Endothelial cell of umbilical vein (primary cell): ENCODE measurements at regions of chrX and their contacts with region 1.

Region 1: DNA sequence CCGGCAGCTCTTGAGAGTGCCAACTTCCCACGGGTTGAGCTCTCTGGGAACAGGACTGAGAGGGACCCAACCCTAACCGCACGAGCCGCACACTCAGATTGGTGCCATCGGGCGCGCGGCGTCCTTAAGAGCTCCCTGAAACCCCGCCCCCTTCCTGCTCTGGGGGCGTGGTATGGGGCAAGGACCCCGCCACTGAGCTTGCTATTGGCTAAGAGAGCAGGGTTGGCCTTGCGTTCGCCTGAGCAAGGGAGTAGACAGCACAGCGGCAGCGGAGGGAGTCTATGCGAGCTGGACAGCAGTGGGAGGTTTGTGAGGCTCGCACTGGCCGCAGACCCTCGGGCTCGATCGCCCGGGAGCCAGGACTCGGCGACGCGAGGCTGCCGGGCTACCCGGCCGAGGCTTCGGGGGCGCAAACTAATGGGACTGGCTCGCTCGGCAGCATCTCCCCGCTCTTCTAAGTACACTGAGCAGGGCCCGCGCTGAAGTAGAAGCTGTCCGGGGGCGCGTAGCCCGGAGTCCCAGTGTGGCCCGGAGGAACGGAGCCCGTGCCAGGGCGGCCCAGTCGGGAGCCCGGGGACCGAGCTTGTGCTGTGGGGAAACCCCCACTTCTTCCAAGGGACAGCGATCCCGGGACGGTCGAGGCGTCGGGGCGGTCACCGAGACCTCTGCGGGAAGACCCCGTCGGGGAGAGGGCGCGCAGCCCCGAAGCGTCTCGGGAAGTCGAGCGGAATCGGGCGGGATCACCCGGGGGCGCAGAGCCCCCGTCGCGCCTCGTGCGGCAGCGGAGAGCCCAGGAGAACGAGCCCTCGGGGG is at the start of gene EFNB1:
- DNase-seq: peak; percentile 95
- H3K4me3 ChIP-seq: peak within 1 kb of the TSS; percentile 49 to 59 (median 50)
- H3K27ac ChIP-seq: no peak within 1 kb of the TSS
- H3K4me1 ChIP-seq: peaks cover 10% of the 10 kb centered on the region
- H3K27me3 ChIP-seq: peaks cover 0 to 2% of the 10 kb centered on the region in 2 experiments
- CTCF ChIP-seq: no peak
- POLR2A ChIP-seq: peak; percentile 88
- total RNA-seq, gene EFNB1: 8.8 and 13.3 TPM in 2 replicates

Region 2: DNA sequence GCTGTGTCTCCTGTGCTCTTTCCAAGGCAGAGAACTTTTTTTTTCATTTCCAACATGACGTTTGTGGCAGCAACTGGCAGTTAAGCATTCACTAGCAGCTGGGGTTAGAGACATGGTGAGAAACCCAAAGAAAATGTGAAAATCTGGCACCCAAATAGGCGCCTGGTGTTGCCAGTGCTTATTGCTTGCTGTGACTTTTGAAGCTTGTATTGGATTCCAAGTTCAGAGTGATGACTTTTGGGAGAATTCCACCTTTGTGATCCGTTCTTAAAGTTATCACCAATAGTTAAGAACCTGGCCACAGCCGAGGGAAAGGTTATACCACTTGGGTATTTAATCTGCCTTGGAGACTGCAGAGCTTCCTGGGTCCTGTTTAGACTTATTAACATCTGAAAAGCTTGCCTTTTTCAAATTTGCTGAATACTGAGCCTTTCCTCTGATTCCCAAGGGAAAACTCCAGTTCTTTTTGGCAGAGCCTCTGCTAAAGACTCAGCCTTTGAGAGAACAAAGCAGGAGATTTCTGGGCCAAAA is 496.7 kb before region 1 on chrX:
- CTCF ChIA-PET with region 1: no interaction called
- POLR2A ChIA-PET with region 1: no interaction called
- dilution Hi-C with region 1: no loop called
- intact Hi-C with region 1: no loop called
- DNase-seq: no peak
- H3K4me3 ChIP-seq: no peak overlapping the region
- H3K27ac ChIP-seq: no peak overlapping the region
- H3K4me1 ChIP-seq: no peaks in the 10 kb centered on the region
- H3K27me3 ChIP-seq: no peaks in the 10 kb centered on the region
- CTCF ChIP-seq: no peak
- POLR2A ChIP-seq: no peak

Region 3: DNA sequence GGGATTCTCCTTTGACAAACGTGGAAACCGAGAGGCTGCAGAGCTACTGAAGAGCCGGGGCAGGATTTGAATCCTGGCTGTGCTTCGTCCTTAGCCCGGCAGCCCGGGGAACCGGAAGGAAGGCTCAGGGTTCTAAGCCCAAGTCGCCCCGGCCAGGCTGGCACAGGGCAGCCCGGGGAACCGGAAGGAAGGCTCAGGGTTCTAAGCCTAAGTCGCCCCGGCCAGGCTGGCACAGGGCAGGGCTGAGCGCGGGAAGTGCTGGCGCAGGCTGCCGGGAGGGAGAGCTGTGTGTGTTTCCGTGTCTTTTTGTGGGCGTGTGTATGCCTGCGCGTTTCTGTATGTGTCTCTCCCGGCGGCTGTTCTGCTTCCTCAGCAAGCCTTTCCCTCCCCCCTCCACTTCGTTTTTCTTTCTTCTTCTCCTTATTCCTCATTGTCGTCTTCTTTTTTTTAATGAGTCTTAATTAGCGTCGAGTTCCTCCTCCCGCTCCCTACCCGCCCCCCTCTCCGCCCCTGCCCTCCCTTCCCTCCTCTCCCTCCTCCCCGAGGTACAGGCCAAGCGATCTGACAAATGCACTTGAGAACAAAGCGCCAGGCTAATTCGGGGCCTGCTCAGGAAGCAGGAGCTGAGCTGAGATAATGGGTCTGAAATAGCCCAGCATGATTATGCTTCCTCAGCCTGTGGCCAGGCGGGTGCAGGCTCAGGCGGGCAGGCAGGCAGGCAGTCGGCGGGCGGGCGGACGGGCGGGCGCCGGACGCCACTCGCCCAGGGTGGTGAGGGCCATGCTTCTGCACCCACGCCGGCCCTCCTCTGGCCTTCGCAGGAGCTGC is 65.8 kb after region 1 on chrX:
- CTCF ChIA-PET with region 1: interaction called, 43 read pairs
- POLR2A ChIA-PET with region 1: interaction called, 36 read pairs
- dilution Hi-C with region 1: no loop called
- intact Hi-C with region 1: loop called (anchors 1 kb)
- DNase-seq: peak; percentile 88
- H3K4me3 ChIP-seq: no peak overlapping the region
- H3K27ac ChIP-seq: peak overlapping the region; percentile 65
- H3K4me1 ChIP-seq: peaks cover 15% of the 10 kb centered on the region
- H3K27me3 ChIP-seq: no peaks in the 10 kb centered on the region
- CTCF ChIP-seq: no peak
- POLR2A ChIP-seq: no peak

Region 4: GRCh38 chrX:68989865-68990606 is 161.1 kb after region 1 on chrX:
- CTCF ChIA-PET with region 1: interaction called, 13 read pairs
- POLR2A ChIA-PET with region 1: interaction called, 6 read pairs
- dilution Hi-C with region 1: no loop called
- intact Hi-C with region 1: no loop called
- DNase-seq: peak; percentile 44
- H3K4me3 ChIP-seq: no peak overlapping the region
- H3K27ac ChIP-seq: no peak overlapping the region
- H3K4me1 ChIP-seq: no peaks in the 10 kb centered on the region
- H3K27me3 ChIP-seq: no peaks in the 10 kb centered on the region
- CTCF ChIP-seq: no peak
- POLR2A ChIP-seq: no peak

Region 5: DNA sequence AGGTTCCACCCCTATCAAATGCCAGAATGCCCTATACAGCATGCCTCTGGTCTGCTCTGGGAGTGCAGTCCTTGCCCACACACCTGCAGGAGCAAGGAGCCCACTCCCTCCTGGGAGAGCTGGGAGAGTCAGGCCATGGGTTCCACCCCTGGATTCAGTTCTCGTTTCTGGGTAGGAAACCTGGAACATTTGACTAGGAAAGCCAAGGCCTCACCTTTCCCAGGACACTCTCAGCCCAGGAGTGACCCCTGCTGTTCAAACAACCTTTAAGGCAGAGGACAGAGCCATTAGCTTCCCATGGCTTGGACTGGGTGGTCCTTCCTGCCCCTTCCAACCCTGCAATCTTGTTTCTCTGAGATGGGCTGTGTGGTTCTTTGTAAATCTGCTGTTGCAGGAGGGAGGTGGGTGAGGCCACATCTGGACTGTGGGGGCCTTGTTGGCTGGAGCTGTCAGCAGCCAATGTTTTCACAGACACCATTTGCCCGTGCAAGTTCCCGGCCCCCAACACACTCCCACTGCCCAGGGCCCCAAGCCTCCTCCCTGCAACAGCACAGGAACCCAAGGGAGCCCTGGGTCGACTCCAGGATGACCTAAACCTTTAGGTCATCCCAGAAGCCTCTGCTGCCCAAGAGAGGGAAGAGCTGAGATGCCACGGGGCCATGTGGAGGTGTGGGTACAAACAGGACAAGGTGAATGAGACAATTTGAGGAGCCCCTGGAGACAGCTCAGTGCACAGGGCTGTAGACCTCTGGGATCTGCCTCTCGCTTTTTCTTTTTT is 231.9 kb after region 1 on chrX:
- CTCF ChIA-PET with region 1: interaction called, 164 read pairs
- POLR2A ChIA-PET with region 1: interaction called, 27 read pairs
- dilution Hi-C with region 1: no loop called
- intact Hi-C with region 1: loop called (anchors 1 kb)
- DNase-seq: peak; percentile 33
- H3K4me3 ChIP-seq: no peak overlapping the region
- H3K27ac ChIP-seq: no peak overlapping the region
- H3K4me1 ChIP-seq: no peaks in the 10 kb centered on the region
- H3K27me3 ChIP-seq: no peaks in the 10 kb centered on the region
- CTCF ChIP-seq: peak in 1 of 2 donors; percentile 42
- POLR2A ChIP-seq: no peak

Region 6: GRCh38 chrX:69165087-69165651 is 336.2 kb after region 1 on chrX and contains the start of gene PJA1:
- CTCF ChIA-PET with region 1: interaction called, 14 read pairs
- POLR2A ChIA-PET with region 1: interaction called, 21 read pairs
- dilution Hi-C with region 1: no loop called
- intact Hi-C with region 1: loop called (anchors 2 kb)
- DNase-seq: peak; percentile 66
- H3K4me3 ChIP-seq: peak within 1 kb of the TSS; percentile 79 to 83 (median 83)
- H3K27ac ChIP-seq: peak within 1 kb of the TSS; percentile 2
- H3K4me1 ChIP-seq: peaks cover 3% of the 10 kb centered on the region
- H3K27me3 ChIP-seq: peaks cover 0 to 3% of the 10 kb centered on the region in 2 experiments
- CTCF ChIP-seq: no peak
- POLR2A ChIP-seq: no peak
- total RNA-seq, gene PJA1: 14.6 and 16.1 TPM in 2 replicates

Region 7: DNA sequence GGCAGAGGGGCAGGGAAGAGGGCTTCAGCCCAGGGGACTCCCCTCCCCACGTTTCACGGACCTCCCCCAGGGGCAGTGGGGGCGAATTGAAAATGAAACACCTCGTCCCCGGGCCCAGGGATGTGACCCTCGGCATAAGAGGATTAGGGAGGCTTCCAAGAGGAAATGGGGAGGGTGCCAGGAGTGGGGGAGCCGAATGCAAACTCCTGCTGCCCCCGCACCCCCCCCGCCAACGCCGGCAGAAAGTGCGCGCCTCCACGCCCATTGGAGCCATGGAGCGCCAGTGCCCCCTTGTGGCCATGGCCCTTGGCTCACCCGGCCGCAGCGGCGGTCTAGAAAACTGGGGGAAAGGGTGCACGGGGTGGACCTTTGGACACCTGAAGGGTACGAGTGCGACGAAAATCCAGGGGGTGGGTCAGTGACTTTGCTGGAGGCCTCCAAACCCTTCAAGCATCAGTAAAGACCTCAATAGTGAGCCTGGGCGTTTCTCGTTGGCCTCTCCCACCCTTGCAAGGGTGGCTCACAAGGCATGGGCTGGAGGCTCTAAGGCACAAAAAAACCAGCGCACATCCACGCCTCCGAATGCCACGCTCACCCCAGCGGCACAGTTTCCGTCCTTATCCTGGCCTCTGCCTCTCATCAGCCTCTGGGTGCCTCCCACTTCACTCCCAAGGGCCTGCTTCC is 457.1 kb after region 1 on chrX:
- CTCF ChIA-PET with region 1: interaction called, 33 read pairs
- POLR2A ChIA-PET with region 1: interaction called, 7 read pairs
- dilution Hi-C with region 1: no loop called
- intact Hi-C with region 1: loop called (anchors 1 kb)
- DNase-seq: no peak
- H3K4me3 ChIP-seq: peak overlapping the region in 1 of 3 experiments; percentile 33
- H3K27ac ChIP-seq: no peak overlapping the region
- H3K4me1 ChIP-seq: peaks cover 3% of the 10 kb centered on the region
- H3K27me3 ChIP-seq: no peaks in the 10 kb centered on the region
- CTCF ChIP-seq: peak; percentile 61 to 86
- POLR2A ChIP-seq: no peak

Region 8: GRCh38 chrX:70096052-70096451 is 1267.1 kb after region 1 on chrX:
- CTCF ChIA-PET with region 1: no interaction called
- POLR2A ChIA-PET with region 1: no interaction called
- dilution Hi-C with region 1: no loop called
- intact Hi-C with region 1: loop called (anchors 5 kb)
- DNase-seq: peak; percentile 31
- H3K4me3 ChIP-seq: no peak overlapping the region
- H3K27ac ChIP-seq: no peak overlapping the region
- H3K4me1 ChIP-seq: no peaks in the 10 kb centered on the region
- H3K27me3 ChIP-seq: no peaks in the 10 kb centered on the region
- CTCF ChIP-seq: peak in 1 of 2 donors; percentile 26
- POLR2A ChIP-seq: no peak